ENCODE measurements at regions of chr9 and their contacts with region 1.

Region 1: DNA sequence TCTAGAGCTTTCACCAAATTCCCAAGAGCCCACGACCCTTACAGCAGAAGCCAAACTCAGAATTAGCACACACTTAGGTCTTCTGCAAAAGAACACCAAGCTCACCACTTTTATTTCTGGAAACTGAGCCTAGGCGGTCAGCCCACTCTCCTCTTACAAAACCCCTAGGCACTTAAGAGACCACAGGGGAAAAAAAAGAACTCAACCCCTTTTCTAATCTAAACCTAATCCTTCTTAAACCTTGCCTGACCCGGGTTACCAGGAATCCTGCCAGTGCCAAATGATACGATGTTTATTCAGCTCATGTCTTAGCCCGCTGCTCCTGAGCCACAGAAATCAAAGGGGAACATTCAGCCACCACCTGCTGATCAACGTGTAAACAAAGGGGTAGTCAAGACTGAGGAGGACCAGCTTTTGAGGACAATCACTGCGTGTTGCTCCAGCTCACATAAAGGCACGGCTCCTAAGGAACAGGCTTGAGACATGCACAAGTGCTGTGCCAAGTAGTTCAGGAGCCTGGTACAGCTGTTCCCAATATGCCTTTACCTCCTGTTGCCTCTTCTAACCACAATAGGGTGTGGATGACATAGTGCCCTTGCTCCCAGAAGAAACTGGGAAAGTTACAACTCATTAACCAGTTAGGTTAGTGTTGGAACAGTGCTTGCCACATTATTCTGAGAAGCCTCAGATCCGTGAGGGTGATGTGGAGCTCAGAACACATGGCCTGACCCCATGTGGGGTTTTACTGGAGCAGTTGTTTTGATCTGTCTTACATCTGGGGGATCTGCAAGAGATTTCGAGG is 49.3 kb downstream of the ZFAND5 start:
- DNase-seq: peak; percentile 40 to 91
- ATAC-seq: peak; percentile 87 to 91
- H3K4me3 ChIP-seq: peak overlapping the region; percentile 22; the same call in 2 of the 3 replicates
- H3K27ac ChIP-seq: peak overlapping the region; percentile 87 to 90
- H3K4me1 ChIP-seq: peaks cover 51% of the 10 kb centered on the region
- CTCF ChIP-seq: no peak
- EP300 ChIP-seq: peak; percentile 34 to 61; a peak in 3 of 5 replicates
- POLR2A ChIP-seq: no peak
- RAD21 ChIP-seq: no peak; a peak in 1 of 5 replicates

Region 2: GRCh38 chr9:72305102-72305546 is 10.6 kb before region 1 on chr9:
- CTCF ChIA-PET with region 1: interaction called, 6 read pairs
- POLR2A ChIA-PET with region 1: interaction called, 36 read pairs
- DNase-seq: peak; percentile 97 to 99
- ATAC-seq: peak; percentile 100
- H3K4me3 ChIP-seq: peak overlapping the region; percentile 51
- H3K27ac ChIP-seq: peak overlapping the region; percentile 87 to 90
- H3K4me1 ChIP-seq: peaks cover 31% of the 10 kb centered on the region
- CTCF ChIP-seq: no peak
- EP300 ChIP-seq: no peak
- POLR2A ChIP-seq: peak; percentile 61
- RAD21 ChIP-seq: no peak; a peak in 1 of 5 replicates

Region 3: GRCh38 chr9:72383978-72384709 is 68.4 kb after region 1 on chr9:
- CTCF ChIA-PET with region 1: no interaction called
- POLR2A ChIA-PET with region 1: no interaction called
- DNase-seq: peak in 1 of 2 experiments; percentile 22
- ATAC-seq: peak; percentile 68 to 87; a peak in 4 of 6 replicates
- H3K4me3 ChIP-seq: no peak overlapping the region
- H3K27ac ChIP-seq: peak overlapping the region; percentile 40 to 65; a peak in 4 of 6 replicates
- H3K4me1 ChIP-seq: peaks cover 11% of the 10 kb centered on the region; the same call in 2 of the 3 replicates
- CTCF ChIP-seq: no peak
- EP300 ChIP-seq: no peak
- POLR2A ChIP-seq: no peak
- RAD21 ChIP-seq: no peak